Activated naive CD4-positive, alpha-beta T cell treated with anti-CD3 and anti-CD28 coated beads for 36 hours (primary cell): ENCODE measurements at regions of chr11 and their contacts with region 1.

Region 1: DNA sequence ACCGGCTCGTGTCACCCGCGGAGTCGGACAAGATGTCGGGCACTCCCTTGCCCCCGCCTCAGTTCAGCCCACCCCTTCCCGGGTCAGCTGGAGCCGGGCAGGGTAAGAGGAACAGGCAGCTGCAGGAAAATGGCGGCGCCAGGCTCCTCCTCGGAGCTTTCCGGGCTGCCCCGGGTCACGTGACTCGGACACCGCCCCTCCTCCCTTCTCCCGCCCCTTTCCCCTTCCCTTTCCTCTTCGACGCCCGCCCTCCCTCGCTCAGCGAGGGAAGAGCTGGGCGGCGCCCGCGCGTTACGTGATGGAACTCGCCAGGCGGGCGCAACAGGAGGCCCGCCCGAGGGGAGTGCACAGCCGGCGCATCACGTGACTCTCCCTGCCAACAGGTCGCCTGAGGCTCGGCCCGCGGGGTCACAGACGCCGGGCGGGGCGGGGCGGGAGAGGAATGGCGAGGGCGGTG is at the start of gene PICALM:
- DNase-seq: peak; percentile 99
- H3K4me3 Mint-ChIP-seq: peak within 1 kb of the TSS; percentile 95
- H3K27ac Mint-ChIP-seq: peak within 1 kb of the TSS; percentile 95
- H3K4me1 Mint-ChIP-seq: peaks cover 29% of the 10 kb centered on the region
- H3K27me3 Mint-ChIP-seq: no peaks in the 10 kb centered on the region
- total RNA-seq, gene PICALM: 38.6 to 42.3 TPM

Region 2: GRCh38 chr11:84890676-84891075 is 1178.3 kb before region 1 on chr11:
- CTCF ChIA-PET with region 1: no interaction called
- intact Hi-C with region 1: no loop called
- DNase-seq: no peak
- H3K4me3 Mint-ChIP-seq: no peak overlapping the region
- H3K27ac Mint-ChIP-seq: no peak overlapping the region
- H3K4me1 Mint-ChIP-seq: no peaks in the 10 kb centered on the region
- H3K27me3 Mint-ChIP-seq: no peaks in the 10 kb centered on the region

Region 3: DNA sequence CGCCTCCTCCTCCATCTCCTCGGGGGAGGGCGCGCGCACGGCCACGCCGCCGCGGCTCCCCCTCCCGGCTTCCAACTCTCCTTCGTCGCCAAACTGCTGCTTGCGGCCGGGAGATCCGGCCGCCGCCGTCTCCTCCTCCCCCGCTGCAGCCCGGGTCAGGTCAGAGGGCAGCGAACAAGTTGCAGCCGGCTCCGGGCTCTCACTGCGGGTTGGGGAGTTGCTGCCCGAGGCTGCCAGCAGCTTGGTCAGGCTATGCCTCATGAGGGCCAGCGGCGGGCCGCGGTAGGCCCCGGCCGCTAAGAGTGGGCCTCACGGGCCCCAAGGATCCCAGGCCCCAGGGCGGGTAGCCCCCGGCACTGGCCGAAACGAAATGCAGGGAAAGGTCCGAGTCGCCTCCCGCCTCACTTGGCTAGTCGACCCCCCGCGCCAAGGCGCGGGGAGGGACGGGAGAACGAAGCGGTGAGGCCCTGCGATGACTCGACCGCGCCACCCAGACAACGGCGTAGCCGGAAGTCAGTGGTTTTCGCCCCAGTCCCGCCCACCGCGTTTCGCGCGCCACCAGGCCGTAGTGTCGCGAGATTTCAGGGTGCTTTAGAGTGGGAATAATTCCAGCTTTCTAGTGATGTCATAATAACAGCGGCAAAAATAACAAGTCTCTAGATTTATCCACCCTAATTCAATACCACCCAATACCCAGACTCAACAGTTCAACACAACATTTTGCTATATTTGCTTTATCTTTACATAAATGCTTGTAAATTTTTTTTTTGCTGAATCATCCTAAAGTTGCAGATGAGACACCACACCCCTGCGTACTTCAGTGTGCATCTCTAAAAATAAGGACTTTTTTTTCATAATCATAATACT is 404.1 kb before region 1 on chr11 and contains the start of gene CREBZF:
- CTCF ChIA-PET with region 1: no interaction called
- intact Hi-C with region 1: loop called (anchors 1 kb)
- DNase-seq: peak; percentile 98
- H3K4me3 Mint-ChIP-seq: peak within 1 kb of the TSS; percentile 98
- H3K27ac Mint-ChIP-seq: peak within 1 kb of the TSS; percentile 96
- H3K4me1 Mint-ChIP-seq: peaks cover 23% of the 10 kb centered on the region
- H3K27me3 Mint-ChIP-seq: no peaks in the 10 kb centered on the region
- total RNA-seq, gene CREBZF: 53.3 to 53.9 TPM

Region 4: GRCh38 chr11:86041975-86042378 is 27.0 kb before region 1 on chr11:
- CTCF ChIA-PET with region 1: interaction called, 47 read pairs
- intact Hi-C with region 1: loop called (anchors 1 kb)
- DNase-seq: peak; percentile 77
- H3K4me3 Mint-ChIP-seq: no peak overlapping the region
- H3K27ac Mint-ChIP-seq: peak overlapping the region; percentile 73
- H3K4me1 Mint-ChIP-seq: peaks cover 69% of the 10 kb centered on the region
- H3K27me3 Mint-ChIP-seq: no peaks in the 10 kb centered on the region

Region 5: GRCh38 chr11:86116386-86116726 is 47.4 kb after region 1 on chr11:
- CTCF ChIA-PET with region 1: interaction called, 3 read pairs
- intact Hi-C with region 1: loop called (anchors 2 kb)
- DNase-seq: peak; percentile 57
- H3K4me3 Mint-ChIP-seq: no peak overlapping the region
- H3K27ac Mint-ChIP-seq: peak overlapping the region; percentile 17
- H3K4me1 Mint-ChIP-seq: peaks cover 28% of the 10 kb centered on the region
- H3K27me3 Mint-ChIP-seq: peaks cover 5% of the 10 kb centered on the region

Region 6: GRCh38 chr11:86132667-86133249 is 63.8 kb after region 1 on chr11:
- CTCF ChIA-PET with region 1: no interaction called
- intact Hi-C with region 1: no loop called
- DNase-seq: no peak
- H3K4me3 Mint-ChIP-seq: no peak overlapping the region
- H3K27ac Mint-ChIP-seq: no peak overlapping the region
- H3K4me1 Mint-ChIP-seq: no peaks in the 10 kb centered on the region
- H3K27me3 Mint-ChIP-seq: peaks cover 1% of the 10 kb centered on the region

Region 7: GRCh38 chr11:86202013-86202336 is 133.0 kb after region 1 on chr11:
- CTCF ChIA-PET with region 1: interaction called, 8 read pairs
- intact Hi-C with region 1: loop called (anchors 1 kb)
- DNase-seq: peak; percentile 42
- H3K4me3 Mint-ChIP-seq: no peak overlapping the region
- H3K27ac Mint-ChIP-seq: no peak overlapping the region
- H3K4me1 Mint-ChIP-seq: no peaks in the 10 kb centered on the region
- H3K27me3 Mint-ChIP-seq: no peaks in the 10 kb centered on the region

Region 8: DNA sequence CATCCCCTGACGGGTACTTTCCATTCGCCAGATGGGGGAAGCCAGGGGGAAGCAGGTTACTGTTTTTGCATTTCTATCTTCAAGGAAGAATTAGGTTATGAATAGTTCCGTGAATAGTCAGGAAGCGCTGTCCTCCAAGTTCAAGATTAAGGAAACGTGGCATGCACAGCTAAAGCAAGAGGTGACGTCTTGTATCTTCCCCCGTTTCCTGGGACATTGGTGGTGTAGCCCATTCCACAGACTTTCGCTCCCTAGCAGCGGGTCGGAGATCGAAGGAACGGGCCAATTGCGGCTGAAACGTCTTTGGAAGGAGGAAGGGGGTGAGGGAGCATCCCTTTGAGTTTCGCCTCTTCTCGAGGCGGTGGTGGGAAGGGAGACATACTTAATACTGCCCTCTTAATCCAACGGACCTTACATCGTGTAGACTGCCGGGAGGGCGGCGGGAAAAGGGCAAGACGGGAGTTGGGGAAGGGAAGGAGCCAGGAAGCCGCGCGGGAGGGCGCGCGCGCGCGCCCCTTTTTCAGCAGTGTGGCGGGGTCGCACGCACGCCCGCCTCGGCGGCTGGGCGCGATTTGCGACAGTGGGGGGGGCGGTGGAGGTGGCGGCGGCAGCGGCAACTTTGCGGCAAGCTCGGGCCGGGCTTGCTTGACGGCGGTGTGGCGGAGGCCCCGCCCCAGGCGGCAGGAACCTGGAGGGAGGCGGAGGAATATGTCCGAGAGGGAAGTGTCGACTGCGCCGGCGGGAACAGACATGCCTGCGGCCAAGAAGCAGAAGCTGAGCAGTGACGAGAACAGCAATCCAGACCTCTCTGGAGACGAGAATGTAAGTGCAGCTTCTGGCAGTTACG is 175.8 kb after region 1 on chr11 and contains the start of gene EED:
- CTCF ChIA-PET with region 1: interaction called, 9 read pairs
- intact Hi-C with region 1: loop called (anchors 1 kb)
- DNase-seq: peak; percentile 94
- H3K4me3 Mint-ChIP-seq: no peak within 1 kb of the TSS
- H3K27ac Mint-ChIP-seq: no peak within 1 kb of the TSS
- H3K4me1 Mint-ChIP-seq: peaks cover 35% of the 10 kb centered on the region
- H3K27me3 Mint-ChIP-seq: no peaks in the 10 kb centered on the region
- total RNA-seq, gene EED: 60.4 to 61.0 TPM

Region 9: GRCh38 chr11:86632499-86633269 is 563.7 kb after region 1 on chr11:
- CTCF ChIA-PET with region 1: no interaction called
- intact Hi-C with region 1: no loop called
- DNase-seq: peak; percentile 61
- H3K4me3 Mint-ChIP-seq: no peak overlapping the region
- H3K27ac Mint-ChIP-seq: no peak overlapping the region
- H3K4me1 Mint-ChIP-seq: peaks cover 6% of the 10 kb centered on the region
- H3K27me3 Mint-ChIP-seq: no peaks in the 10 kb centered on the region

Region 10: GRCh38 chr11:87081358-87081757 is 1012.4 kb after region 1 on chr11:
- CTCF ChIA-PET with region 1: no interaction called
- intact Hi-C with region 1: no loop called
- DNase-seq: no peak
- H3K4me3 Mint-ChIP-seq: peak overlapping the region; percentile 68
- H3K27ac Mint-ChIP-seq: peak overlapping the region; percentile 65
- H3K4me1 Mint-ChIP-seq: peaks cover 19% of the 10 kb centered on the region
- H3K27me3 Mint-ChIP-seq: no peaks in the 10 kb centered on the region